K562 (cell line): ENCODE measurements at regions of chr15 and their contacts with region 1.

Region 1: GRCh38 chr15:65610871-65611718 is at the start of gene INTS14:
- DNase-seq: peak; percentile 97 to 98 (median 97)
- ATAC-seq: peak; percentile 98
- H3K4me3 ChIP-seq: peak within 1 kb of the TSS; percentile 64
- H3K27ac ChIP-seq: peak within 1 kb of the TSS; percentile 89
- H3K4me1 ChIP-seq: peaks cover 8 to 21% of the 10 kb centered on the region in 2 experiments; a peak in 4 of 5 replicates
- H3K27me3 ChIP-seq: no peaks in the 10 kb centered on the region
- CTCF ChIP-seq: peak; percentile 72 to 85 (median 80)
- EP300 ChIP-seq: peak; percentile 63
- POLR2A ChIP-seq: peak; percentile 96
- RAD21 ChIP-seq: peak in 1 of 2 experiments; percentile 80
- polyA plus RNA-seq, gene INTS14: 40.6 to 64.0 TPM

Region 2: DNA sequence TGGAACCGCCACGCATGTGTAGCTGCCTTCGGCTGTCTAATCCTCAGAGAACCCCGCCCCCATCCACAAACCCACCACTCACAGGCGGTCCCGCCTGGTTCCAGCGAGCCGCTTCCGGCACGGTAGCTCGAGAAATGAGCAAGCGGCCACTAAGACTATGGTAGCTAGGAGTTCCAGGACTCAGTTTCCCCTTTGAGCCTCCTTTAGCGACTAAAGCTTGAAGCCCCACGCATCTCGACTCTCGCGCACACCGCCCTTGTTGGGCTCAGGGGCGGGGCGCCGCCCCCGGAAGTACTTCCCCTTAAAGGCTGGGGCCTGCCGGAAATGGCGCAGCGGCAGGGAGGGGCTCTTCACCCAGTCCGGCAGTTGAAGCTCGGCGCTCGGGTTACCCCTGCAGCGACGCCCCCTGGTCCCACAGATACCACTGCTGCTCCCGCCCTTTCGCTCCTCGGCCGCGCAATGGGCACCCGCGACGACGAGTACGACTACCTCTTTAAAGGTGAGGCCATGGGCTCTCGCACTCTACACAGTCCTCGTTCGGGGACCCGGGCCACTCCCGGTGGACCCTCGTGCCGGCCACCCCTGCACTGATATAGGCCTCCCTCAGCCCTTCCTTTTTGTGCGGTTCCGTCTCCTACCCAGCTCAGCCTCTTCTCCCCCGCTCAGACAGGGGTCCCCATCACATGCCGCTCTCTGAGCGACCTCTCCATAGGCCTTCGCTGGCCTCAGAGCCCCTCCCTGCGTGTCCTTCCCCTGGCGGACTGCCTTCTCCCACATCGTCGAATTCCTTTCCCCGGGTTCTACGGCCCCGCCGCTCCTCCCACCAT is 258.2 kb after region 1 on chr15 and contains the start of gene RAB11A:
- CTCF ChIA-PET with region 1: no interaction called
- POLR2A ChIA-PET with region 1: interaction called, 6 read pairs
- in situ Hi-C with region 1: no loop called
- intact Hi-C with region 1: loop called (anchors 2 kb)
- DNase-seq: peak; percentile 94 to 98 (median 96)
- ATAC-seq: peak; percentile 94
- H3K4me3 ChIP-seq: peak within 1 kb of the TSS; percentile 87
- H3K27ac ChIP-seq: peak within 1 kb of the TSS; percentile 96
- H3K4me1 ChIP-seq: peaks cover 11 to 12% of the 10 kb centered on the region in 2 experiments; a peak in 3 of 5 replicates
- H3K27me3 ChIP-seq: no peaks in the 10 kb centered on the region
- CTCF ChIP-seq: peak; percentile 49 to 58 (median 53); a peak in 4 of 6 replicates
- EP300 ChIP-seq: 0 out of 2 replicates have a peak, but pooled peaks have one; percentile 18
- POLR2A ChIP-seq: peak; percentile 99
- RAD21 ChIP-seq: peak in 1 of 2 experiments; percentile 39; a peak in 2 of 4 replicates
- polyA plus RNA-seq, gene RAB11A: 236 to 271 TPM